Activated naive CD4-positive, alpha-beta T cell treated with anti-CD3 and anti-CD28 coated beads for 36 hours (primary cell): ENCODE measurements at regions of chr6 and their contacts with region 1.

Region 1: GRCh38 chr6:30717042-30717844 is at the start of gene MDC1:
- DNase-seq: peak; percentile 100
- H3K4me3 Mint-ChIP-seq: peak within 1 kb of the TSS; percentile 98
- H3K27ac Mint-ChIP-seq: peak within 1 kb of the TSS; percentile 99
- H3K4me1 Mint-ChIP-seq: peaks cover 45% of the 10 kb centered on the region
- H3K27me3 Mint-ChIP-seq: no peaks in the 10 kb centered on the region
- total RNA-seq, gene MDC1: 84.1 to 84.8 TPM

Region 2: DNA sequence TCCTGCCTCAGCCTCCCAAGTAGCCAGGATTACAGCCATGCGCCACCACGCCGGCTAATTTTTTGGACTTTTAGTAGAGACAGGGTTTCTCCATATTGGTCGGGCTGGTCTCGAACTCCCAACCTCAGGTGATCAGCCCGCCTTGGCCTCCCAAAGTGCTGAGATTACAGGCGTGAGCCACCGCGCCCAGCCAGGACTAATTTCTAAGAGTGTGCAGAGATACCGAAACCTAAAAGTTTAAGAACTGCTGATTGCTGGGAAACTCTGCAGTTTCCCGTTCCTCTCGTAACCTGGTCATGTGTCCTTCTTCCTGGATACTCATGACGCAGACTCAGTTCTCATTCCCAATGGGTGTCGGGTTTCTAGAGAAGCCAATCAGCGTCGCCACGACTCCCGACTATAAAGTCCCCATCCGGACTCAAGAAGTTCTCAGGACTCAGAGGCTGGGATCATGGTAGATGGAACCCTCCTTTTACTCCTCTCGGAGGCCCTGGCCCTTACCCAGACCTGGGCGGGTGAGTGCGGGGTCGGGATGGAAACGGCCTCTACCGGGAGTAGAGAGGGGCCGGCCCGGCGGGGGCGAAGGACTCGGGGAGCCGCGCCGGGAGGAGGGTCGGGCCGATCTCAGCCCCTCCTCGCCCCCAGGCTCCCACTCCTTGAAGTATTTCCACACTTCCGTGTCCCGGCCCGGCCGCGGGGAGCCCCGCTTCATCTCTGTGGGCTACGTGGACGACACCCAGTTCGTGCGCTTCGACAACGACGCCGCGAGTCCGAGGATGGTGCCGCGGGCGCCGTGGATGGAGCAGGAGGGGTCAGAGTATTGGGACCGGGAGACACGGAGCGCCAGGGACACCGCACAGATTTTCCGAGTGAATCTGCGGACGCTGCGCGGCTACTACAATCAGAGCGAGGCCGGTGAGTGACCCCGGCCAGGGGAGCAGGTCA is 227.9 kb before region 1 on chr6 and contains the start of gene HLA-E:
- CTCF ChIA-PET with region 1: no interaction called
- intact Hi-C with region 1: loop called (anchors 1 kb)
- DNase-seq: peak; percentile 95
- H3K4me3 Mint-ChIP-seq: peak within 1 kb of the TSS; percentile 90
- H3K27ac Mint-ChIP-seq: peak within 1 kb of the TSS; percentile 97
- H3K4me1 Mint-ChIP-seq: peaks cover 54% of the 10 kb centered on the region
- H3K27me3 Mint-ChIP-seq: no peaks in the 10 kb centered on the region
- total RNA-seq, gene HLA-E: 598 to 608 TPM

Region 3: DNA sequence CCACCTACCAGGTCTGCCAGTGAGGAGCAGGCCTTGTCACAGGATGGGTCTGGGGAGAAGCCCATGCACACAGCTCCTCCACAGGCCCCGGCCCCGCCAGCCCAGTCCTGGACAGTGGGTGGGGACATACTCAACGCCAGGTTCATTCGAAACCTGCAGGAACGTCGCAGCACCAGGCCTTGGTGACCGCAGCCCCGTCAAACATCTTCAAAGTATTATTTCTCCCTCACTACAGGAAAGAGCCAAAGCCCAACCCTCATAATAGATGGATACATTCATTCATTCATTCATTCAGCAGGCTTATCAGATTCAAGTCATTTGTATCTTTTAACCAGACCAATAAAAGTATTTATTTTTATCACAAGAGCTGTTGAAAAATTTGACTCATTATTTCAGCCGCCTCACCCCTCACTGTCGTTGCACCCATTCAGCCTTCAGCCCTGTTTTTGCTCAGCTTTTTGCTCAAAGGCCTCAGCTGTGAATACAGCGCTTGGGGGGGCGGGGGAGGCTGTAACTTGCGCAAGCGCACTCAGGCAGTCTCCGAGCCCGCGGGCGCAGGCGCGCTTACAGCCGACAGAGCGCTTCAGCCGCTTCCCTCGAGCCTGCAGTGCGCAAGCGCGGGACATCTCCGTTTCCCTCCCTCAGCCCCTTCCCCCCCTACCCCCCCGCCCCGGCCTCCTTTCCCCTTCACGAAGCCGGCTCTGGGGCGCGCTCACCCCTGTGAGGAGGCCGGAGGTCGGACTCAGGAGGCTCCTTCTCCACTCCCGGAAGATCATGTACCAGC is 70.6 kb before region 1 on chr6 and contains the start of gene C6orf136:
- CTCF ChIA-PET with region 1: no interaction called
- intact Hi-C with region 1: loop called (anchors 1 kb)
- DNase-seq: peak; percentile 94
- H3K4me3 Mint-ChIP-seq: peak within 1 kb of the TSS; percentile 85
- H3K27ac Mint-ChIP-seq: peak within 1 kb of the TSS; percentile 86
- H3K4me1 Mint-ChIP-seq: peaks cover 22% of the 10 kb centered on the region
- H3K27me3 Mint-ChIP-seq: no peaks in the 10 kb centered on the region
- total RNA-seq, gene C6orf136: 33.6 TPM

Region 4: DNA sequence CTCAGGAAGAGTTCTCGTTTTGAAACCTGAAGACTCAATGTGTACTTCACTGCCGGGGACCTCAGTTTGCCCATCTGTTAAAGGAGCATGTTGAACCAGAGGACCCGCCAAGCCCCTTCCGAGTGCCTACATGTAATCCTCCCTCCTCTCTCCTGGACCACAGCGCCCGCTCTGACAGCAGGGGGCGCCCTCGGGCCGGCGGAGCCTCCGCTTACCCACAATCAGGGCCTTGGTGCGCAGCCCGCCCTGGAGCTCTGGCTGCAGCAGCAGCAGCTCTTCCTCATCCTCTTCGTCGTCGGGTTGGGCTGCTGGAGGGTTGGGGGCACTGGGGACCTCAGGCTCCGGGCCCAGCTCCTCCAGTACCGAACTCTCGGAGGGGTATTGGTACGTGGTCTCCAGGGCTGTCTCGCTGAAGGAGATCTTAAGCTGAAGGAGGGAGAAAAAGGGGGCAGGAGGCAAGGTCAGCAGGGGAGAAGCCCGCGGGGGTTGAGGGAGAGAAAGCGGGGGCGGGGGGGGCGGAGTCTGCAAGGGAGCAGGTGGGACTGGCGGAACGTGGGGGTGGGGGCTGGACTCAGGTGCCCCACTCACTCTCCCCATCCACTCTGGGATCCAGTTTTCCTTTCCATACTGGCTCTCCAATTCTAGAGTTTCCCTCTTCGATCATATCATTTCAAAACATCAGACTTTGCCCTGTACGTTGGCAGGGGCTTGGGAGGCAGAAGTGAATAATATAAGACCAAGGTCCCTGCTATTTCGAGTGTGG is 38.1 kb before region 1 on chr6:
- CTCF ChIA-PET with region 1: interaction called, 346 read pairs
- intact Hi-C with region 1: loop called (anchors 1 kb)
- DNase-seq: peak; percentile 95
- H3K4me3 Mint-ChIP-seq: peak overlapping the region; percentile 96
- H3K27ac Mint-ChIP-seq: peak overlapping the region; percentile 100
- H3K4me1 Mint-ChIP-seq: peaks cover 21% of the 10 kb centered on the region
- H3K27me3 Mint-ChIP-seq: no peaks in the 10 kb centered on the region

Region 5: GRCh38 chr6:30730601-30731435 is 13.6 kb after region 1 on chr6:
- CTCF ChIA-PET with region 1: interaction called, 26 read pairs
- intact Hi-C with region 1: loop called (anchors 2 kb)
- DNase-seq: peak; percentile 94
- H3K4me3 Mint-ChIP-seq: peak overlapping the region; percentile 29
- H3K27ac Mint-ChIP-seq: no peak overlapping the region
- H3K4me1 Mint-ChIP-seq: peaks cover 47% of the 10 kb centered on the region
- H3K27me3 Mint-ChIP-seq: no peaks in the 10 kb centered on the region

Region 6: GRCh38 chr6:30798494-30798893 is 81.3 kb after region 1 on chr6:
- CTCF ChIA-PET with region 1: no interaction called
- intact Hi-C with region 1: no loop called
- DNase-seq: no peak
- H3K4me3 Mint-ChIP-seq: no peak overlapping the region
- H3K27ac Mint-ChIP-seq: no peak overlapping the region
- H3K4me1 Mint-ChIP-seq: peaks cover 21% of the 10 kb centered on the region
- H3K27me3 Mint-ChIP-seq: no peaks in the 10 kb centered on the region

Region 7: DNA sequence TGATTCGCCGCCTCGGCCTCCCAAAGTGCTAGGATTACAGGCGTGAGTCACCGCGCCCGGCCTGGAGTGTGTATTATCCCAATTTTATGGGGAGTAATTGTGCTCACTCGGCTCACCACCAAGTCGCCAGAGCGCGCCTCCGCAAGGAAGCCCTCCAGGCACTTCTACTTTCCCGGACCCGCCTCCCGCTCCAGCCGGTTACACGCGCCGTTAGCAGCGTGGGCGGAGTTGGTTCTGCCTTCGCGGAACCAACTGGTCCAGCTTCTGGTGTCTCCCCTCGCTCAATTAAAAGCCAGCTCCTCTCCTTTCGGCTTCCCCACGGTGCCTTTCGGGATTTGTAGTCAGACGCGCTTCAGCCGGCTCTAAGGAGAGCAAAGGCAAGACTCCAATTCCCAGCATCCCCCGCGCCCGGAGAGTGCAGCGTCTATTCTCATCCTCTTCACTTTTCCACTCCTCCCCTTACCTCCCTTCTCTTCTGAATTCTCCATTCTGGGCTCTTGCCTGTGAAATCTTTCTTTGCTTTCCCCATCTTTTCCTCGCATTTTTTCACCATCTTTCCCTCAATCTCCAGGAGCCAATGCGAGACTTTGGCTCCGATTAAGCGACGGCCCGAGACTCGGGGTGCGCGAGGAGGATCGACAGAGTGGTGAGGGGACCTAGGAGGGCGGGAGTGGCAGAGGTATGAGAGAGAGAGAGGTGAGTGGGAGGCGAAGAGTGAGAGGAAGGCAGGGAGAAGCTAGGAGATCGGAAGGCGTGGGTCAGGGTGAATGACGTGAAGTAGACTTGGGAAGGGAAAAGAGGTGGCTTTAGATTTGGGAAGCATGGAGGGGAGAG is 190.7 kb after region 1 on chr6 and contains the start of gene GTF2H4:
- CTCF ChIA-PET with region 1: no interaction called
- intact Hi-C with region 1: loop called (anchors 1 kb)
- DNase-seq: peak; percentile 98
- H3K4me3 Mint-ChIP-seq: peak within 1 kb of the TSS; percentile 99
- H3K27ac Mint-ChIP-seq: peak within 1 kb of the TSS; percentile 78
- H3K4me1 Mint-ChIP-seq: peaks cover 17% of the 10 kb centered on the region
- H3K27me3 Mint-ChIP-seq: no peaks in the 10 kb centered on the region
- total RNA-seq, gene GTF2H4: 33.3 to 42.4 TPM